ENCODE measurements at regions of chr13 and their contacts with region 1.

Region 1: GRCh38 chr13:108895220-108895704 is 265.9 kb downstream of the MYO16 start:
- DNase-seq: no peak
- H3K4me3 ChIP-seq: no peak overlapping the region
- H3K27ac ChIP-seq: no peak overlapping the region
- H3K4me1 ChIP-seq: no peaks in the 10 kb centered on the region
- H3K27me3 ChIP-seq: no peaks in the 10 kb centered on the region
- CTCF ChIP-seq: peak; percentile 12 to 49 (median 38)

Region 2: GRCh38 chr13:108227651-108228272 is 667.5 kb before region 1 on chr13:
- intact Hi-C with region 1: loop called (anchors 5 kb)
- DNase-seq: no peak
- H3K4me3 ChIP-seq: no peak overlapping the region
- H3K27ac ChIP-seq: no peak overlapping the region
- H3K4me1 ChIP-seq: peaks cover 0 to 7% of the 10 kb centered on the region in 2 donors
- H3K27me3 ChIP-seq: no peaks in the 10 kb centered on the region
- CTCF ChIP-seq: peak; percentile 30 to 77 (median 77)

Region 3: DNA sequence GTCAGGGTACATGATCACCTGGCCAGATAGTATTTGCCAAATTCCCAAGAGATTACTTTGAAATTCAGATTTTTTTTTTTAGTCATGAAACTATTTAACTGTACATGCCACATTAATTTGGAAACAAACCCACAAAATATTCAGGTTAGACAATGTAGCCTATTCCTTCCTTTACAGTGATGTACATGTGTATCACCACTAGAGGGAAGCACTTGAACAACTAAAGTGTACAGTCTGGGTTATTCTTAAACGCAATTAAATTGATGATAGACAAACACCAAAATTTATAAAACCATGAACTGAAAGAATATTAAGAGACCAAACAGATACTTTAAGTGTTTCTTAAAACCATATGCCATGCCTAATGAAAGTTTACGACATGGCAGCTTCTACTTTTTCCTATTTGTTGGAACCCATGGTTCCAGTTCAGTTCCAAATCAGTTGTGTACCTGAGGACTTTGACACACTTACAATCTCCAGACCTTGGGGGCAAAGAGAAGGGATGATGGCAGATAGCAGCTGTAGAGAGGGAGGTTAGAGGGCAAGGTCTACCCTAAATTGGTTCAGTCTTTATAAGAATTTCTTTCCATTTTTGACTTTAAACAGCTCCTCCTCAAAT is 572.9 kb before region 1 on chr13:
- intact Hi-C with region 1: loop called (anchors 2 kb)
- DNase-seq: no peak
- H3K4me3 ChIP-seq: no peak overlapping the region
- H3K27ac ChIP-seq: no peak overlapping the region
- H3K4me1 ChIP-seq: no peaks in the 10 kb centered on the region
- H3K27me3 ChIP-seq: no peaks in the 10 kb centered on the region
- CTCF ChIP-seq: peak; percentile 57 to 60 (median 58)

Measured in ascending aorta (tissue), 2 donors.